Uterus (tissue), 4 donors: ENCODE measurements at regions of chr7 and their contacts with region 1.

Region 1: GRCh38 chr7:17991866-17992648 is 35.6 kb downstream of the PRPS1L1 start:
- DNase-seq: no peak
- H3K4me3 ChIP-seq: no peak overlapping the region
- H3K27ac ChIP-seq: no peak overlapping the region
- H3K4me1 ChIP-seq: no peaks in the 10 kb centered on the region
- H3K27me3 ChIP-seq: no peaks in the 10 kb centered on the region
- CTCF ChIP-seq: no peak
- POLR2A ChIP-seq: no peak

Region 2: GRCh38 chr7:17408245-17408903 is 583.7 kb before region 1 on chr7:
- intact Hi-C with region 1: loop called (anchors 10 kb)
- DNase-seq: peak in 1 of 2 donors; percentile 26
- H3K4me3 ChIP-seq: no peak overlapping the region
- H3K27ac ChIP-seq: no peak overlapping the region
- H3K4me1 ChIP-seq: no peaks in the 10 kb centered on the region
- H3K27me3 ChIP-seq: no peaks in the 10 kb centered on the region
- CTCF ChIP-seq: no peak
- POLR2A ChIP-seq: no peak